Mammary epithelial cell (primary cell): ENCODE measurements at regions of chr20 and their contacts with region 1.

Region 1: GRCh38 chr20:62182613-62183425 is at the start of gene MTG2:
- DNase-seq: peak; percentile 91
- H3K4me3 ChIP-seq: peak within 1 kb of the TSS; percentile 93 to 99 (median 95)
- H3K27ac ChIP-seq: peak within 1 kb of the TSS; percentile 82
- H3K4me1 ChIP-seq: peaks cover 11% of the 10 kb centered on the region
- H3K27me3 ChIP-seq: no peaks in the 10 kb centered on the region
- CTCF ChIP-seq: no peak
- total RNA-seq, gene MTG2: 20.7 to 38.6 TPM

Region 2: GRCh38 chr20:62156592-62157386 is 26.0 kb before region 1 on chr20:
- CTCF ChIA-PET with region 1: no interaction called
- dilution Hi-C with region 1: no loop called
- in situ Hi-C with region 1: no loop called
- intact Hi-C with region 1: loop called (anchors 2 kb)
- DNase-seq: no peak
- H3K4me3 ChIP-seq: no peak overlapping the region
- H3K27ac ChIP-seq: no peak overlapping the region
- H3K4me1 ChIP-seq: peaks cover 51% of the 10 kb centered on the region
- H3K27me3 ChIP-seq: no peaks in the 10 kb centered on the region
- CTCF ChIP-seq: peak; percentile 47 to 67

Region 3: GRCh38 chr20:62237801-62238571 is 55.2 kb after region 1 on chr20 and contains the start of gene OSBPL2:
- CTCF ChIA-PET with region 1: no interaction called
- dilution Hi-C with region 1: loop called (anchors 10 kb)
- in situ Hi-C with region 1: no loop called
- intact Hi-C with region 1: loop called (anchors 2 kb)
- DNase-seq: peak; percentile 99
- H3K4me3 ChIP-seq: peak within 1 kb of the TSS; percentile 67 to 86 (median 78)
- H3K27ac ChIP-seq: peak within 1 kb of the TSS; percentile 63
- H3K4me1 ChIP-seq: peaks cover 28% of the 10 kb centered on the region
- H3K27me3 ChIP-seq: no peaks in the 10 kb centered on the region
- CTCF ChIP-seq: no peak
- total RNA-seq, gene OSBPL2: 39.7 to 52.4 TPM

Region 4: DNA sequence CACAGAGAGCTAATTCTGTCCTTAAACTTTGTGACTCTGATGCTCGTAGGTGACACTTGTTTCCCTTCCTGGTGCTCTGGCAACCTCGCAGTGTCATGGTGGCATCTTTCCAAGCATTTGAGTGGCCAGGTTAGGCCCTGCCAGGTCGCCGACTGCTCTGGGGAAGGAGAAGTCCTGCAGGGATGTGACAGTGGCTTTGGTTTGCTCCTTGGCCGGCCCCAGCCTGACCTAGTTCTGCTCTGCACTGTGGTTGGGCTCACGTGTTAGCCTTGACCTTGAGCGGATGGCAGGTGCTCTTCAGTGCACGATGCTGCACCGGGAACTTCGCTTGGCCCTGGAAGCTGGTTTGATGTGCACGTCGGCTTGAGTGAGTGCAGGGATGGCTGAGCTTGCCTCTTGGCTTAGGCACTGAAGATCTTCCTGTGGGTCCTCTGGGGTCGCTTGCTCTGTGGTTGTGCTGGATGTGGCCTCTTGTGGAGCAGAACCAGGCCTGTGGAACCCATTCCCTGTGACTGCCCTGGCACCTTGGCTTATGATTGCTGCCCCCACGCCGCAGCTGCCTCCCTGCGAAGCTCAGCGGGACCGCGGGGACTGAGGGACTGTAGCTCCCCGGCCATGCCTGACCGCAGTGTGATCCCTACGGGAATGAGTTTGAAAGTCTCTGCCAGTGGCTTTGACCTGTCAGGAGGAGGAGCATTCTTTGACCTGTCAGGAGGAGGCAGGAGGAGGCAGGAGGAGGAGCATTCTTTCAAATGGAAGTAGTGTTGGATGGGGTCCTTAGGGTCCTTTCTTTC is 64.2 kb after region 1 on chr20:
- CTCF ChIA-PET with region 1: no interaction called
- dilution Hi-C with region 1: loop called (anchors 10 kb)
- in situ Hi-C with region 1: no loop called
- intact Hi-C with region 1: no loop called
- DNase-seq: no peak
- H3K4me3 ChIP-seq: no peak overlapping the region
- H3K27ac ChIP-seq: no peak overlapping the region
- H3K4me1 ChIP-seq: peaks cover 10% of the 10 kb centered on the region
- H3K27me3 ChIP-seq: no peaks in the 10 kb centered on the region
- CTCF ChIP-seq: no peak

Region 5: GRCh38 chr20:62357187-62357667 is 174.4 kb after region 1 on chr20:
- CTCF ChIA-PET with region 1: no interaction called
- dilution Hi-C with region 1: no loop called
- in situ Hi-C with region 1: no loop called
- intact Hi-C with region 1: no loop called
- DNase-seq: peak; percentile 58
- H3K4me3 ChIP-seq: no peak overlapping the region
- H3K27ac ChIP-seq: no peak overlapping the region
- H3K4me1 ChIP-seq: peaks cover 87% of the 10 kb centered on the region
- H3K27me3 ChIP-seq: no peaks in the 10 kb centered on the region
- CTCF ChIP-seq: no peak